ENCODE measurements at regions of chrX and their contacts with region 1.

Region 1: GRCh38 chrX:5775846-5776430 is 452.7 kb downstream of the NLGN4X start:
- DNase-seq: no peak
- H3K4me3 ChIP-seq: no peak overlapping the region
- H3K27ac ChIP-seq: no peak overlapping the region
- H3K4me1 ChIP-seq: no peaks in the 10 kb centered on the region
- H3K27me3 ChIP-seq: no peaks in the 10 kb centered on the region
- CTCF ChIP-seq: no peak

Region 2: GRCh38 chrX:4451591-4451990 is 1324.3 kb before region 1 on chrX:
- intact Hi-C with region 1: loop called (anchors 5 kb)
- DNase-seq: no peak
- H3K4me3 ChIP-seq: no peak overlapping the region
- H3K27ac ChIP-seq: no peak overlapping the region
- H3K4me1 ChIP-seq: no peaks in the 10 kb centered on the region
- H3K27me3 ChIP-seq: no peaks in the 10 kb centered on the region
- CTCF ChIP-seq: no peak

Region 3: DNA sequence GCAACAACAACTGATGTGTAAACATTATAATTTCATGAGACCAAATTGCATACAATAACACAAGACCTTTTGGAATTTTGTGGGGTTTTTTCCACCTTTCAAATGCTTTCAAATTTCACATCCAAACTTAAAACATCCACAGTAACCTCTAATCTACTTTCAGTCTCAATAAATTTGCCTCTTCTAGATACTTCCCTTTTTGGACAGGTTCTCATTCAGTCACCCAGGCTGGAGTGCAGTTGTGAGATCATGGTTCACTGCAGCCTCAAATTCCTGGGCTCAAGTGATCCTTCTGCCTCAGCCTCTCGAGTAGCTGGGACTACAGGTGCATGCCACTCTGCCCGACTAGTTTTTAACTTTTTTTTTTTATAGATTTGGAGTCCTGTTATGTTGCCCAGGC is 103.8 kb before region 1 on chrX:
- intact Hi-C with region 1: no loop called
- DNase-seq: no peak
- H3K4me3 ChIP-seq: no peak overlapping the region
- H3K27ac ChIP-seq: no peak overlapping the region
- H3K4me1 ChIP-seq: no peaks in the 10 kb centered on the region
- H3K27me3 ChIP-seq: no peaks in the 10 kb centered on the region
- CTCF ChIP-seq: no peak